MCF 10A (cell line): ENCODE measurements at regions of chr1 and their contacts with region 1.

Region 1: GRCh38 chr1:11719313-11720032 is 16.5 kb upstream of the AGTRAP start:
- DNase-seq: peak; percentile 47
- H3K4me3 Mint-ChIP-seq: peak overlapping the region; percentile 53
- H3K27ac Mint-ChIP-seq: no peak overlapping the region
- H3K4me1 Mint-ChIP-seq: peaks cover 5% of the 10 kb centered on the region
- H3K27me3 Mint-ChIP-seq: no peaks in the 10 kb centered on the region
- CTCF ChIP-seq: peak; percentile 89

Region 2: DNA sequence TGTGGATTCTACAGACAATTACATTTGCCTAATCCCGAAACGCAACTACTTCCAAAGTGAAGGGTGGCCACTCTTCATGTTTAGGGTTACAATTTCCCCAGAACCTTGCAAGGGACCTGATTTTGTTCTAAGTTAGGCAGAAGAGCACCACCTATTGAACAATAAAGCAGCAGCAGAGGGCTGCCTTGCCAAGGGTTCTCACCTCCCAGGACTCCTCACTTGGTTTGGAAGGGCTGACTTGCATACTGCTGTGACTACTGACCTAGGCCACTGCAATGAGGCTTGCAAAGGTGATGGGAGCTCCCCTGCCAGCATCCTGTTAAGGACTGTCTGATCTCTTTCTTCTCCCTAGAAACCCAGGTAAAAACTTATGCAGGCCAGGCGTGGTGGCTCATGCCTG is 471.3 kb before region 1 on chr1:
- CTCF ChIA-PET with region 1: no interaction called
- POLR2A ChIA-PET with region 1: no interaction called
- intact Hi-C with region 1: loop called (anchors 5 kb)
- DNase-seq: no peak
- H3K4me3 Mint-ChIP-seq: no peak overlapping the region
- H3K27ac Mint-ChIP-seq: no peak overlapping the region
- H3K4me1 Mint-ChIP-seq: no peaks in the 10 kb centered on the region
- H3K27me3 Mint-ChIP-seq: no peaks in the 10 kb centered on the region
- CTCF ChIP-seq: no peak

Region 3: GRCh38 chr1:11661103-11661502 is 58.4 kb before region 1 on chr1:
- CTCF ChIA-PET with region 1: interaction called, 27 read pairs
- POLR2A ChIA-PET with region 1: interaction called, 9 read pairs
- intact Hi-C with region 1: loop called (anchors 1 kb)
- DNase-seq: no peak
- H3K4me3 Mint-ChIP-seq: no peak overlapping the region
- H3K27ac Mint-ChIP-seq: no peak overlapping the region
- H3K4me1 Mint-ChIP-seq: no peaks in the 10 kb centered on the region
- H3K27me3 Mint-ChIP-seq: no peaks in the 10 kb centered on the region
- CTCF ChIP-seq: no peak

Region 4: GRCh38 chr1:11681071-11681771 is 38.3 kb before region 1 on chr1 and contains the start of gene MAD2L2:
- CTCF ChIA-PET with region 1: interaction called, 12 read pairs
- POLR2A ChIA-PET with region 1: interaction called, 3 read pairs
- intact Hi-C with region 1: no loop called
- DNase-seq: peak; percentile 81
- H3K4me3 Mint-ChIP-seq: peak within 1 kb of the TSS; percentile 88
- H3K27ac Mint-ChIP-seq: peak within 1 kb of the TSS; percentile 79
- H3K4me1 Mint-ChIP-seq: peaks cover 5% of the 10 kb centered on the region
- H3K27me3 Mint-ChIP-seq: no peaks in the 10 kb centered on the region
- CTCF ChIP-seq: no peak
- total RNA-seq, gene MAD2L2: 40.1 and 46.3 TPM in 2 replicates

Region 5: DNA sequence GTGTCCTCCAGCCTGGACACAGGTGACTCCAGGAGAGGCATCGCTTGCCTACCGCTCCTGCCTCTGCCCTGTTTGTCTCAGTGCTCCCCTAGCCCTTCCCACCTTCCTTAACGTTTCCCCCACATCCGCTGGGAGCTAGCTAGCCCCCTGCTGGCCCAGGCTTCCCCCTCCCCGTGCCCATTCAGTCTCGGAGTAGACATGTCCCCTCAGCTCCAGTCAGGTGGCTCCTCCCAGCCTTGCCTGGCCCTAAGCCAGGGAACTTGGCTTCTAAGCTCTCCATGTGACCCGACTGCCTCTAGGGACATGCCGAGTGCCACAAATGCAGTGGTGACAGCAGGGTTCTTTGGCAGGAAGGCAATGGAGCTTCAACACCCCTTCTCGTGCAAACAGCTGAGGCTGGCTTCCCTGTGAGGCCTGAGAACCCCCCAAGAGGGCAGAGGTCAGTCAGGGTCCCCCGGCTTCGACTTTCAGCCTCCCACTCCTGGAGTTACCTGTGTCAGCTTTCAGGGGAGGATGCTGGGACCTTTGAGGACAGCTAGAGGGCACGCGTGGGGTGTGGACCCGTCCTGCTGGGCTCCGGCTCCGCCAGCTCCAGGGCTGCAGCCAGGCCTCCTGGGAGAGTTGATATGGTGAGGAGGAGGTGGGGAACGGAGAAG is 11.7 kb before region 1 on chr1:
- CTCF ChIA-PET with region 1: interaction called, 14 read pairs
- POLR2A ChIA-PET with region 1: interaction called, 3 read pairs
- intact Hi-C with region 1: no loop called
- DNase-seq: no peak
- H3K4me3 Mint-ChIP-seq: no peak overlapping the region
- H3K27ac Mint-ChIP-seq: no peak overlapping the region
- H3K4me1 Mint-ChIP-seq: peaks cover 5% of the 10 kb centered on the region
- H3K27me3 Mint-ChIP-seq: peaks cover 11% of the 10 kb centered on the region
- CTCF ChIP-seq: no peak